HEK293 (cell line): ENCODE measurements at regions of chr9 and their contacts with region 1.

Region 1: DNA sequence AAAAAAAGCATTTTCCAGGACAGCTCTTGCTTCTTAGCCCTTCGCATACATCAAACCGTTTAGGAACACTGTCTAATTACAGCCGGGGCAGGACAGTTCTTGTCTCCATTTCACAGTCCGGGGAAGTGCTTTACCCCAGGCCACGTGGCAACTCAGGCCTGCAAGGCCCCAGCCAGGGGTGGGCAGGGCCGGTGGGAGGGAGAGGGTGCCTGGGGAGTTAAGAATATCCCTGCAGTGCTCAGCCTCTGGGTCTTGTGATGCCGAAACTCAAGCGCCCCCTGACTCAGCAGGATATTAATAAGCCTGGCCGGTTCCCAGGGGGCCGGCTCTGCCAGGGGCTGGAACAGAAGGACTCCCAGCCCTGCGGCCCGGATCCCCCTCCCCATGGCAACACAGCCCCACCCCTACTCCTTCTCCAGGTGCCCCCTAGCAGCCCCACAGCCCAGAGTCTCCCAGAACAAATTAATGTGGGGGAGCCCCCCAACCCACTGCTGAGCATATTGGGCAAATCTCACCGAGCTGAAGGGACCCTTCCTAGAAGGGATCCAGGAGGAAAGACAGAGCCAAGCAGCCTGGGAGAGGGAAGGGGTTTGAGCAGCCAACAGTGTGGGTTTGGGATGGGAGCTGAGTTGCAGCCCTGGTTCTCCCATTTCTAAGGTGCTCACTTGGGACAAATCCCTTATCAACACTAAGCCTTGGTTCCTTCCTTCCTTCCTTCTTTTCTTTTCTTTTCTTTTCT is 45.3 kb downstream of the PLPP7 start:
- H3K4me3 ChIP-seq: no peak overlapping the region
- H3K27ac ChIP-seq: no peak overlapping the region
- H3K4me1 ChIP-seq: no peaks in the 10 kb centered on the region
- CTCF ChIP-seq: no peak

Region 2: GRCh38 chr9:131062969-131063368 is 271.8 kb before region 1 on chr9:
- CTCF ChIA-PET with region 1: interaction called, 94 read pairs
- POLR2A ChIA-PET with region 1: no interaction called
- H3K4me3 ChIP-seq: no peak overlapping the region
- H3K27ac ChIP-seq: no peak overlapping the region
- H3K4me1 ChIP-seq: no peaks in the 10 kb centered on the region
- CTCF ChIP-seq: no peak

Region 3: GRCh38 chr9:131187957-131188356 is 146.8 kb before region 1 on chr9:
- CTCF ChIA-PET with region 1: interaction called, 11 read pairs
- POLR2A ChIA-PET with region 1: no interaction called
- H3K4me3 ChIP-seq: no peak overlapping the region
- H3K27ac ChIP-seq: no peak overlapping the region
- H3K4me1 ChIP-seq: no peaks in the 10 kb centered on the region
- CTCF ChIP-seq: no peak

Region 4: DNA sequence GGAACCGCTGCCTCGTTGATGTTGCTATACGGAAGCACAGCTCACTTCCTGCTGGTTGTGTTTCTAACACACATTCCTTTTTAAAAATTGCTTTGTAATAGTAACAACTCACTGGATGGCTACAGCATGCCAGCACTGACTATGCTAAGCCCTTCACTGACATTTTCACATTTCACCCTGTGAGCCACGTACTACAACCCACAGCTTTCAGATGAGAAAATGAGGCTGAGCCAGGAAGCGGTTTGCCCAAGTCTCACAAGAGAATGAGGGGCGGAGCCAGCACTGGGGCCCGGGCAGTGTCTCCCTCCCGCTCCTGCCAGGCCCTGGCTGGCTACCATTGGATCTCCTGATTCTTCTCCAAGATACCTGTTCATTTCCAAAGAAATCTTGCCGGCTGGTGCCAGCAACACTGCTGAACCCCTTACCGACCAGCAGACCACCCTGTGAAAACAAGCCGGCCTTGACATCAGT is 96.8 kb before region 1 on chr9:
- CTCF ChIA-PET with region 1: interaction called, 15 read pairs
- POLR2A ChIA-PET with region 1: no interaction called
- H3K4me3 ChIP-seq: no peak overlapping the region
- H3K27ac ChIP-seq: no peak overlapping the region
- H3K4me1 ChIP-seq: no peaks in the 10 kb centered on the region
- CTCF ChIP-seq: no peak

Region 5: GRCh38 chr9:131287359-131287758 is 47.4 kb before region 1 on chr9:
- CTCF ChIA-PET with region 1: interaction called, 13 read pairs
- POLR2A ChIA-PET with region 1: no interaction called
- H3K4me3 ChIP-seq: no peak overlapping the region
- H3K27ac ChIP-seq: no peak overlapping the region
- H3K4me1 ChIP-seq: no peaks in the 10 kb centered on the region
- CTCF ChIP-seq: no peak